ENCODE measurements at regions of chr18 and their contacts with region 1.

Region 1: DNA sequence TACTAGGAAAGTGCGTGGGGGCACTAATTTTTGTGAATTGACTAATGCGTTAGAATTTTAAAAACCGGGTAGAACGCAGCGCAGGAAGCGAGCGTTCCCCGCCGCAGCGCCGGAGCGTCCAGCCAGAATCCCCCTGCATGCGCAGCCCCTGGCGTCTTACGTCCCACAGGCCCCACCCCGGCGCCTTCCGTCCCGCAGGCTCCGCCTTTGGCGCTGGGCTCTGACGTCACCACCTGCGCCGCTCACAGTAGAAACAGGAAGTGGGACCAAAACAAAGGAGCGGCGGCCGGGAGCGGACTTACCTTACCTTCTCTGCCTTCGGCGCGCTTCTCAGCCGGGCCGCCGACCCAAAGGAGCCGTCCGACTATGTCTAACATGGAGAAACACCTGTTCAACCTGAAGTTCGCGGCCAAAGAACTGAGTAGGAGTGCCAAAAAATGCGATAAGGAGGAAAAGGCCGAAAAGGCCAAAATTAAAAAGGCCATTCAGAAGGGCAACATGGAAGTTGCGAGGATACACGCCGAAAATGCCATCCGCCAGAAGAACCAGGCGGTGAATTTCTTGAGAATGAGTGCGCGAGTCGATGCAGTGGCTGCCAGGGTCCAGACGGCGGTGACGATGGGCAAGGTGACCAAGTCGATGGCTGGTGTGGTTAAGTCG is at the start of gene CHMP1B:
- DNase-seq: peak; percentile 99
- H3K4me3 ChIP-seq: peak within 1 kb of the TSS; percentile 74 to 96 (median 90)
- H3K27ac ChIP-seq: peak within 1 kb of the TSS; percentile 87 to 98 (median 97)
- H3K4me1 ChIP-seq: peaks cover 13 to 56% (median 46%) of the 10 kb centered on the region in 4 donors
- H3K27me3 ChIP-seq: no peaks in the 10 kb centered on the region
- CTCF ChIP-seq: peak in 1 of 7 experiments; percentile 12
- EP300 ChIP-seq: no peak
- POLR2A ChIP-seq: peak in 2 of 4 donors; percentile 97
- total RNA-seq, gene CHMP1B: 17.9 to 96.0 (median 34.2) TPM

Region 2: GRCh38 chr18:11908182-11909060 is 57.1 kb after region 1 on chr18 and contains the start of gene MPPE1:
- intact Hi-C with region 1: loop called (anchors 10 kb)
- DNase-seq: peak; percentile 93 to 97
- H3K4me3 ChIP-seq: peak within 1 kb of the TSS; percentile 55 to 89 (median 69)
- H3K27ac ChIP-seq: peak within 1 kb of the TSS; percentile 98 to 100 (median 98)
- H3K4me1 ChIP-seq: peaks cover 14 to 26% (median 22%) of the 10 kb centered on the region in 4 donors
- H3K27me3 ChIP-seq: no peaks in the 10 kb centered on the region
- CTCF ChIP-seq: peak in 1 of 7 experiments; percentile 6
- EP300 ChIP-seq: no peak
- POLR2A ChIP-seq: peak in 2 of 4 donors; percentile 84 to 86
- total RNA-seq, gene MPPE1: 15.2 to 82.0 (median 53.8) TPM